RWPE1 (cell line): ENCODE measurements at regions of chr12 and their contacts with region 1.

Region 1: GRCh38 chr12:48580831-48581230 is 11.0 kb upstream of the LALBA start:
- DNase-seq: peak; percentile 65
- H3K27ac ChIP-seq: no peak overlapping the region
- CTCF ChIP-seq: no peak

Region 2: DNA sequence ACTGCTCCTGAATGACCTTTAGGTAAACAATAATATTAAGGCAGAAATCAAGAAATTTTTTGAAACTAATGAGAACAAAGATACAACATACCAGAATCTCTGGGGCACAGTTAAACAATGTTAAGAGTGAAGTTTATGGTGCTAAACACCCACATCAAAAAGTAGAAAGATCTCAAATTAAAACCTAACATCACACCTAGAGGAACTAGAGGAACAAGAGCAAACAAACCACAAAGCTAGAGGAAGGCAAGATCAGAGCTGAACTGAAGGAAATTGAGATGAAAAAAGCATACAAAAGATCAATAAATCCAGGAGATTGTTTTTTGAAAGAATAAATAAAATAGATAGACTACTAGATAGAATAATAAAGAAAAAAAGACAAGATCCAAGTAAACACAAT is 48.2 kb before region 1 on chr12:
- CTCF ChIA-PET with region 1: no interaction called
- POLR2A ChIA-PET with region 1: no interaction called
- DNase-seq: no peak
- H3K27ac ChIP-seq: no peak overlapping the region
- CTCF ChIP-seq: no peak

Region 3: DNA sequence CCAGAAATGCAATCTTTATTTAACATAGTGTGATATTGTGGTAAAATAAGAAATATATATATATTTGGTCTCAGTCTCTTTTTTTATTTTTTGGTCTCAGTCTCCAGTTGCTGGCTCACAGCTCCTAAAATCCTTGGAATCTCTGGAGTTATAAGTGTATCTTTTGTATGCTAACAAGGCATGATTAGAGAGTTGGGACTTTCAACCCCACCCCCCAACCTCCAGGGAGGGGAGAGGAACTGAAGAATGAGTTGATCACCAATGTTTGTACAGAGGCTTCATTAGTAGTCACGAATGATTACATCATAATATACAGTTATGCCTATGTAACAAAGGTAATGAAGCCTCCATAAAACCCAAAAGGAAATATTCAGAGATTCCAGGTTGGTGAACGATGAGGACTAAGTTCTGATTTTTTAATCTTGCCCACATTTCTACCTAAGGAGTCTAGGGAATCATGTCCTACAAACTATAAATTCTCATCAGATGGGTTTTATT is 11.8 kb after region 1 on chr12:
- CTCF ChIA-PET with region 1: no interaction called
- POLR2A ChIA-PET with region 1: interaction called, 10 read pairs
- DNase-seq: no peak
- H3K27ac ChIP-seq: no peak overlapping the region
- CTCF ChIP-seq: no peak